ENCODE measurements at regions of chr2 and their contacts with region 1.

Region 1: GRCh38 chr2:71018625-71019024 is 24.0 kb upstream of the TEX261 start:
- DNase-seq: no peak
- H3K4me3 ChIP-seq: no peak overlapping the region
- H3K27ac ChIP-seq: no peak overlapping the region
- H3K4me1 ChIP-seq: peaks cover 9% of the 10 kb centered on the region
- H3K27me3 ChIP-seq: no peaks in the 10 kb centered on the region
- CTCF ChIP-seq: no peak

Region 2: DNA sequence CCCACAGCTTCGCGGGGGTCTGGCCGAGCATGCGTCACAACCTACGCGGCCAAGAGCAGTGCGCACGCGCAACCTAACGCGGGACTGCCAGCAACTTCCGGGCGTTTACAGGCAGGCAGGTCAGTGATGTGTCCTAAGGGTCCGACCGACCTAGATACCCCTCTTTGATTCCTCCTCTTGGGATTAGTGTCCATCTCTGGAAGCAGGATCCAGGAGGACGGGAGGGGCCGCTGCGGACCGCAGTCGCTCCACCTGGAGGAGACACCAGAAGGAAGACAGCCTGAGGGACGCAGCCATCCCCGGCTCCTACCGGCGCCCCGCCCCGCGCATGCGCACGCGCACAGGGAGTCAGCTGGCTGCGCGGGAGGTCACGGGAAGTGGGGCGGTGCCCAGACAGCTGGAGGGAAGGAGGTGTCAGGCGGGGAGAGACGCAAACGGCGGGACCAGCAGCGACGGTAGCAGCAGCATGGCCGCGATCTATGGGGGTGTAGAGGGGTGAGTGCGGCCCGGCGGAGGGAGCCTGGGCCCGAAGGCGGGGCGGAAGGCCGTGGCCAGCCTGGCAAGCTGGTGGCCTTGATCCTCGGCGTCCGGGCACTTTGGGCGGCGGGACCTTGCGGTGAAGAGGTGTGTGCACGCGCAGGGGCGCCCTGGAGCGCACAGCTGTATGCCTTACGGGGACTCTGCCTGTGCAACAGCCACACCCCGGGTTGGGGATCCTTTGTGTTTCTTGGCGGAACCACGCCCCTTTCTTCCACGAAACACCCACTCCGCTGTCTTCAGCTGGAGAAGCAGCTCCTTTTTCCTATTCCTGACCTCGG is 49.8 kb after region 1 on chr2 and contains the start of gene NAGK:
- CTCF ChIA-PET with region 1: interaction called, 3 read pairs
- POLR2A ChIA-PET with region 1: no interaction called
- intact Hi-C with region 1: loop called (anchors 5 kb)
- DNase-seq: peak; percentile 86 to 96
- H3K4me3 ChIP-seq: peak within 1 kb of the TSS; percentile 72
- H3K27ac ChIP-seq: peak within 1 kb of the TSS; percentile 40
- H3K4me1 ChIP-seq: peaks cover 25% of the 10 kb centered on the region
- H3K27me3 ChIP-seq: no peaks in the 10 kb centered on the region
- CTCF ChIP-seq: no peak
- total RNA-seq, gene NAGK: 32.6 and 34.1 TPM in 2 replicates

Region 3: DNA sequence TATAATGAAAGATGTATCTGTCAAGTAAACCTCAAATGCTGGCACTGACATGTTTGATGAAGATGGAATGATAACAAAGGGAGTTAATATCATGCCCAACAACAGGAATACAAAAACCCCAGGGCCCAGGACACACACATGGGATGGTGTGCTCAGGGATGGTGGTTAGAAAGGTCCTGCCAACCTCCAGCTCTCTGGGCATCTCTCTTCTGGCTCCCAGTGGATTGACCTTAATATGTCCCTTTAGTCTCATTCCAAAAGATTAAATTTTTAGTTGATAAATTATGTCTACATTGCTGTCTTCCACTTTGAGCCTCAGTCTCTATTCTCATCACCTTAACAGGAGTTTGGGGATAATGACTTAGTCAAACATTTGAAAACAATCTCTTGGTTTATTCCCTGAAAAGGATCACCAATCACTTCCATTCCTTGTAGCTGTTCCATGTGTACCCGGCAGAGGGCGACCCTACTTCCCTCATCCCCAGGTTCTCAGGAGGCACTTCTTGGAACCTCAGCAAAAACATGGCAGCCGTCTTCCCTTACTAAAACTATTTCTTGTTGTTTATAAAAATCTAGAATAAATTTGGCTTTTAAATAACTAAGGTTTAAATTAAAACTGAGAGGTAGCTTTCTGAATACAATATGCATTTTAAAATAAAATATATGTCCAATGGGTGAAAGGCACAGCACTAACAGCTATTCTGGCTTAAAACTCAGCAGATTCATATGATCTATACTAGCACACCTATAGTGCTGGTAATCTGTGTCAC is 81.8 kb after region 1 on chr2:
- CTCF ChIA-PET with region 1: interaction called, 3 read pairs
- POLR2A ChIA-PET with region 1: no interaction called
- intact Hi-C with region 1: loop called (anchors 1 kb)
- DNase-seq: peak; percentile 39 to 53
- H3K4me3 ChIP-seq: no peak overlapping the region
- H3K27ac ChIP-seq: no peak overlapping the region
- H3K4me1 ChIP-seq: no peaks in the 10 kb centered on the region
- H3K27me3 ChIP-seq: no peaks in the 10 kb centered on the region
- CTCF ChIP-seq: peak; percentile 79

Measured in PC-9 (cell line).